Activated CD4-positive, alpha-beta memory T cell treated with anti-CD3 and anti-CD28 coated beads for 36 hours (primary cell): ENCODE measurements at regions of chr17 and their contacts with region 1.

Region 1: GRCh38 chr17:40139566-40140058 is 725 bp upstream of the CASC3 start:
- DNase-seq: no peak
- H3K4me3 Mint-ChIP-seq: peak overlapping the region; percentile 86
- H3K27ac Mint-ChIP-seq: peak overlapping the region; percentile 98
- H3K4me1 Mint-ChIP-seq: peaks cover 28% of the 10 kb centered on the region
- H3K27me3 Mint-ChIP-seq: no peaks in the 10 kb centered on the region

Region 2: DNA sequence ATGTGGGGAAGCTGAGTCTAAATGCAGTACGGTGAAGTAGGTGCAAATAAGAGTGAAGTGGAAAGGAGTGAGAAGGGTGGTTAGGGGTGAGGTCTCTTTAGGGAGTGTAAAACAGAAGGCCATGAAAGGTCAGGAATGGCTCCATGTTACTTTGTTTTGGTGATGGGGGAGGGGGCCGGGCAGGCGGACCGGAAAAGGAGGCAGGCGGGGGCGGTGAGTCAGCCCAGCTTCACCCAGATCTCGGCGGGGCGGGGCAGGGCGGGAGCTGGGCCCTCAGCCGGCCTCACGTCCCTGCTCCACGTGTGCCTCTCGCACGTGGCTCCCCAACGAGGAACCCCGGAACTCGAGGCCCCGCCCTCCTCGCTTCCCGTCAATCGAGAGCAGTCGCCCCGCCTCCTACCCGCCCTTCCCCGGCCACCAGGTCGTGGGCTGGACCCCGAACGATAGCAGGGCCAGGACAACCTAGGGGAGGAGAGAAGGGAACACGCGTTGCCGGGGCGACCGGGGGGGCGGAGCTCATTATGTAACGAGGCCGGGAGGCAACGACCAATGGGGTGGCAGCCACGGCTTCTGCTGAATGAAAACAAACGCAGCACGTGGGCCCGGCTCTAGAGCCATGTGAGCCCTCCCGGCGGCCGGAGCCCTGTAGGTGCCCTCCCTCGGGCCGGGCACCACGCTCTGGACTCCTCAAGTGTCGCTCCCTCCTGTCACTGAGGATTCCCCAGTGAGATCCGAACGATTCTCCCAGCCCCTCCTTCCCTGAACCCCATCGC is 40.6 kb before region 1 on chr17:
- CTCF ChIA-PET with region 1: interaction called, 3 read pairs
- POLR2A ChIA-PET with region 1: interaction called, 4 read pairs
- intact Hi-C with region 1: loop called (anchors 1 kb)
- DNase-seq: peak; percentile 99
- H3K4me3 Mint-ChIP-seq: peak overlapping the region; percentile 88
- H3K27ac Mint-ChIP-seq: peak overlapping the region; percentile 91
- H3K4me1 Mint-ChIP-seq: peaks cover 85% of the 10 kb centered on the region
- H3K27me3 Mint-ChIP-seq: no peaks in the 10 kb centered on the region

Region 3: GRCh38 chr17:40121181-40122135 is 18.2 kb before region 1 on chr17 and contains the start of gene MSL1:
- CTCF ChIA-PET with region 1: interaction called, 16 read pairs
- POLR2A ChIA-PET with region 1: interaction called, 23 read pairs
- intact Hi-C with region 1: loop called (anchors 1 kb)
- DNase-seq: peak; percentile 89
- H3K4me3 Mint-ChIP-seq: peak within 1 kb of the TSS; percentile 97
- H3K27ac Mint-ChIP-seq: peak within 1 kb of the TSS; percentile 79
- H3K4me1 Mint-ChIP-seq: peaks cover 25% of the 10 kb centered on the region
- H3K27me3 Mint-ChIP-seq: no peaks in the 10 kb centered on the region
- total RNA-seq, gene MSL1: 77.9 to 80.6 TPM

Region 4: DNA sequence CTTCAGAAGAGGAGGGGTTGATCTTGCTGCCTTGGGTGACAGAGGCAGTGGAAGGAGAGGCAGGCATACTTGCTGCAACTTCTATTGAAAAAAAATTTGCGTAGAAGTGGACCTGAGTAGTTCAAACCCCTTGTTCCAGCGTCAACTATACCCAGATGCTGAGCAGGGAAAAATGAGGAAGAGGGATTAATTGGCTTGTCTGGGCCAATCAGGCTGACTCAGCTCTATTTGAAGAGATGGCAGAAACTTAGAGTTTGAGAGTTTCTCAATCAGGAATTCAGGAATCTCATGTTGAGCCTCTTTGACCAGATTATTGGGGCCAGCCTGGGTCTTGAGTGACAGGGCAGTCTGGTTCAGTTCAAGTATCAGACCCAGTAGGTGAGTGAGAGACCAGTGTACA is 18.4 kb after region 1 on chr17:
- CTCF ChIA-PET with region 1: interaction called, 3 read pairs
- POLR2A ChIA-PET with region 1: interaction called, 40 read pairs
- intact Hi-C with region 1: loop called (anchors 1 kb)
- DNase-seq: no peak
- H3K4me3 Mint-ChIP-seq: no peak overlapping the region
- H3K27ac Mint-ChIP-seq: peak overlapping the region; percentile 50
- H3K4me1 Mint-ChIP-seq: peaks cover 44% of the 10 kb centered on the region
- H3K27me3 Mint-ChIP-seq: no peaks in the 10 kb centered on the region

Region 5: GRCh38 chr17:40168262-40168832 is 28.7 kb after region 1 on chr17:
- CTCF ChIA-PET with region 1: interaction called, 25 read pairs
- POLR2A ChIA-PET with region 1: no interaction called
- intact Hi-C with region 1: no loop called
- DNase-seq: peak; percentile 34
- H3K4me3 Mint-ChIP-seq: no peak overlapping the region
- H3K27ac Mint-ChIP-seq: peak overlapping the region; percentile 1
- H3K4me1 Mint-ChIP-seq: peaks cover 3% of the 10 kb centered on the region
- H3K27me3 Mint-ChIP-seq: no peaks in the 10 kb centered on the region

Region 6: DNA sequence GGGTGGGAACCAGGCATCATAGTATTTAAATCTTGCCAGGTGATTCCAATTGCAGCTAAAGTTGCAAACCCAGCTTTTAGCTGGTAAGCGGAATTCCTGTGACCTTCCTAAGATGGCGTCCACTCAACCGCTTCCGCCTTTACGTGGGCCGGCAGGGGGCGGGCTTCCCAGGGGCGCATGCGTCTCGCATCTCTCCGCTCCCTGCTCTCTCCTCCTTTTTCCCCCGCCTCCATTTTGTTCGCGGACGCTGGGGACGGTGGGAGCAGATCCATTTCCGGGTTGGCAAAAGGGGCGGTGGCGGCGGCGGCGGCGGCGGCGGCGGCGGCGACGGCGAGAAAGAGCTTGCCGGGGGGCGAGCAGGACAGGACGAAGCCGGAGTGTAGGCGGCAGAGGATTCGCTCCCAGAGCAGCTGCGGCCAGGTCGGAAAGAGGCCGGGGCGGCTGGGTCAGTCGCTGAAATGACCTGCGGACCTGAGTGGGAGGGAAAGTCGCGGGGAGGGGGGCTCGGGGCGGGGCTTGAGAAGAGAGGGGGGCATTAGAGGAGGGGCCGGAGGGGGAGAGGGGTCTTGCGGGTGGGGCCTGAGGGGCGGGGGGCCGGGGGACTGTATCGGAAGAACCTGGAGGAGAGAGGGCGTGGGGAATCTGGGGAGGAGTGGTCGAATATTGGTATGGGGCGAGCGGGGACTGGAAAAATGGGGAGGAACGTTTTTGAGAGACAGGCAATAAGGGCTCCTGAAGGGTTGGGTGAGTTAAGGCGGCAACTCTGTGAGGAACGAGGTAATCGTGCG is 79.7 kb after region 1 on chr17 and contains the start of gene WIPF2:
- CTCF ChIA-PET with region 1: no interaction called
- POLR2A ChIA-PET with region 1: no interaction called
- intact Hi-C with region 1: loop called (anchors 2 kb)
- DNase-seq: peak; percentile 99
- H3K4me3 Mint-ChIP-seq: peak within 1 kb of the TSS; percentile 86
- H3K27ac Mint-ChIP-seq: peak within 1 kb of the TSS; percentile 92
- H3K4me1 Mint-ChIP-seq: peaks cover 27% of the 10 kb centered on the region
- H3K27me3 Mint-ChIP-seq: no peaks in the 10 kb centered on the region
- total RNA-seq, gene WIPF2: 19.0 to 20.6 TPM

Region 7: DNA sequence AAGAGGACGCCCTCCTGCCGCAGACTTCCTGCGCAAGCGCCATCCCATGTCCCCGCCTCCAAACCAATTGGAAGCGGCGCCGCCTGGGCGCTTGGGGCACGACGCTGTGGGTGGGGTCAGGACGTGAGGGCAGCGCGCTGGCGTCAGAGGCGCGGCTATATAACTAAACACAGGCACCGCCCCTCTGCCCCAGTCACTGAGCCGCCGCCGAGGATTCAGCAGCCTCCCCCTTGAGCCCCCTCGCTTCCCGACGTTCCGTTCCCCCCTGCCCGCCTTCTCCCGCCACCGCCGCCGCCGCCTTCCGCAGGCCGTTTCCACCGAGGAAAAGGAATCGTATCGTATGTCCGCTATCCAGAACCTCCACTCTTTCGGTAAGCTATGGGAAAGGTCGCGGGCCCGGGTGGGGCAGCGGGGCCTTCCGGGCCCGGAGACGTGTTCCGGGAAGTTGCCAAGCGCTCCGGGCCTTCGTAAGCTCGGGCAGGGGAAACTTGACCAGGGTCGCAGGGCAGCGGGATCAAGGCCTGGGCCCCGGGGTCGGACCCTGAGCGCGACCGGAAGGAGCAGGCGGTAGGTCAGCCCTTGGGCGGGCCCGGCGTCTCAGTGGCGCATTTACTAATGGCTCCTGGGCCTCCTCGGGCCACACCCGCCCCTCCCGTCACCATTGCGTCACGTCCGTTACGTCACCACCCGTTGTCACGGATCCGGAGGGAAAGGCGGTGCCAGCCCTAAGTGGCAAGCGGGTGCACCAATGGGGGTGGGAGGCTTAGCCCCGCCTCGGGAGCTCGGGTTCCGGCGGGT is 1549.3 kb after region 1 on chr17 and contains the start of gene EIF1:
- CTCF ChIA-PET with region 1: no interaction called
- POLR2A ChIA-PET with region 1: no interaction called
- intact Hi-C with region 1: loop called (anchors 2 kb)
- DNase-seq: peak; percentile 100
- H3K4me3 Mint-ChIP-seq: peak within 1 kb of the TSS; percentile 95
- H3K27ac Mint-ChIP-seq: peak within 1 kb of the TSS; percentile 99
- H3K4me1 Mint-ChIP-seq: peaks cover 35% of the 10 kb centered on the region
- H3K27me3 Mint-ChIP-seq: no peaks in the 10 kb centered on the region
- total RNA-seq, gene EIF1: 1,052 to 1,072 TPM